ENCODE measurements at regions of chr2 and their contacts with region 1.

Region 1: GRCh38 chr2:207166039-207166348 is 246 bp upstream of the KLF7 start:
- DNase-seq: peak; percentile 99
- H3K4me3 ChIP-seq: peak overlapping the region; percentile 69
- H3K27ac ChIP-seq: peak overlapping the region; percentile 98
- H3K27me3 ChIP-seq: no peaks in the 10 kb centered on the region
- CTCF ChIP-seq: no peak

Region 2: DNA sequence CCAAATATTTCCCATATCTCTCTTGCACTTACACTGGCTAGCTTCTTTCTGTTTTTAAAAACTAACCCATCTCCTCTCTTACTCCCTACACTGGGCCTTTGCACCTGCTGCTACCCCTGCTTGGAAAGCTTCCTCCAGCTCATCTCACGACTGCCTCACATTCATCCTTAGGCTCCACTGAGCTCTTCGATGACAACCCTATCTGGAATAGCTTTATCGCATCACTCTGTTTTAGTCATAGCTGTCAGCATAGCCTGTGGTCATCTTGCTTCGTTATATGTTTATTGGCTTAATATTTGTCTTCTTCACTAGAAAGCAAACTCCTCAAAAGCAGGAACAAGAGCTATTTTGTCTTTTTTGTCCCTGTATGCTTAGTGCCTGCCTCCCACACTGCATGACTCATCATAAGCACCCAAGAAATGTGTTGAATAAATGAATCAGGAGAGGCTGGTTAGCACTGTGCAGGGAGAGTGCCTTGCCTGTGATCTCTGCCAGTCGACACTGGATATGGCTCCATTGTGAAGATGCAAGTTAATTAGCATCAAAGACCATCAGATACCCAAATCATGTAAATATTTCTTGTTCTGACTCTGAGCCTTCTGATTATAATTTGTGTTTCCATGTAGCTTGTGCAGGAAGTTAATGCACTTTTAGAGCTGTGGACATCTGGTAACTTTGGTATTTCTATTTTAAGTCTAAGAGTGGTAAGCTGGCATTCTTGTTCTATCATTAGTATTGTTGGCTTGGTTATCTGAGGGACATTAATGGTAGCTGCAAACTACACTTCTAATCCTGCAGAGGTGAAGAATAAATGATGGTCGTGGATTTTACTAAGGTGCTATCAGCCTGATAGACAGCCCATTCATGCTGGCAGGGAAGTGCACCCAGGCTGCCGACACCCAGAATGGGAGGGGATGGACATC is 437.5 kb before region 1 on chr2:
- CTCF ChIA-PET with region 1: no interaction called
- POLR2A ChIA-PET with region 1: no interaction called
- DNase-seq: no peak
- H3K4me3 ChIP-seq: no peak overlapping the region
- H3K27ac ChIP-seq: no peak overlapping the region
- H3K27me3 ChIP-seq: no peaks in the 10 kb centered on the region
- CTCF ChIP-seq: no peak

Region 3: GRCh38 chr2:206981739-206982340 is 184.2 kb before region 1 on chr2:
- CTCF ChIA-PET with region 1: interaction called, 10 read pairs
- POLR2A ChIA-PET with region 1: interaction called, 9 read pairs
- DNase-seq: peak; percentile 47
- H3K4me3 ChIP-seq: no peak overlapping the region
- H3K27ac ChIP-seq: no peak overlapping the region
- H3K27me3 ChIP-seq: no peaks in the 10 kb centered on the region
- CTCF ChIP-seq: peak; percentile 95

Region 4: DNA sequence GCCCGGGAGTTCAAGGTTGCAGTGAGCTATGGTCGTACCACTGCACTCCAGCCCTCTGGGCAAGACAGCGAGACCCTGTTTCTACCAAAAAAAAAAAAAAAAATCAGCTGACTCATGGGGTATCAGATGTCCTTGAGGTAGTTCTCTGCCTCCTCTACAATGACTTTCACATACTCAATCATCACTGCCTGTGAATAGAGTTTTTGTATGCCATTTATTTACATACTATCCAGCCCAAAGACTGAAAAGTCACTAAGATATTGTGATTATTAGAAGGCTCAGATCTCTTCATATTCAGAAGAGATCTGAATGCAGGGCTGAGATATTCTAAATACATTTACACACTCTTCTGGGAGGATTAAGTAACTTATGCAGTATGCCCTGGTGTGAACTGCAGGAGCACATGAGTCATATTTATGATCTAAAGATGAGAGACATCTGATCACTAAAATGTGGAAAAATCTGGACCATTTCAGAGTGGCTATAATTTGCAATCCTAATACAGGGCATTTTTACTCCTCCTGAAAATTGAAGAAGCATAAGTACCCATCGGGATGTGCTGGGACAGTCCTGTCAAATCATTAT is 39.2 kb before region 1 on chr2:
- CTCF ChIA-PET with region 1: no interaction called
- POLR2A ChIA-PET with region 1: no interaction called
- DNase-seq: no peak
- H3K4me3 ChIP-seq: no peak overlapping the region
- H3K27ac ChIP-seq: no peak overlapping the region
- H3K27me3 ChIP-seq: no peaks in the 10 kb centered on the region
- CTCF ChIP-seq: no peak

Region 5: DNA sequence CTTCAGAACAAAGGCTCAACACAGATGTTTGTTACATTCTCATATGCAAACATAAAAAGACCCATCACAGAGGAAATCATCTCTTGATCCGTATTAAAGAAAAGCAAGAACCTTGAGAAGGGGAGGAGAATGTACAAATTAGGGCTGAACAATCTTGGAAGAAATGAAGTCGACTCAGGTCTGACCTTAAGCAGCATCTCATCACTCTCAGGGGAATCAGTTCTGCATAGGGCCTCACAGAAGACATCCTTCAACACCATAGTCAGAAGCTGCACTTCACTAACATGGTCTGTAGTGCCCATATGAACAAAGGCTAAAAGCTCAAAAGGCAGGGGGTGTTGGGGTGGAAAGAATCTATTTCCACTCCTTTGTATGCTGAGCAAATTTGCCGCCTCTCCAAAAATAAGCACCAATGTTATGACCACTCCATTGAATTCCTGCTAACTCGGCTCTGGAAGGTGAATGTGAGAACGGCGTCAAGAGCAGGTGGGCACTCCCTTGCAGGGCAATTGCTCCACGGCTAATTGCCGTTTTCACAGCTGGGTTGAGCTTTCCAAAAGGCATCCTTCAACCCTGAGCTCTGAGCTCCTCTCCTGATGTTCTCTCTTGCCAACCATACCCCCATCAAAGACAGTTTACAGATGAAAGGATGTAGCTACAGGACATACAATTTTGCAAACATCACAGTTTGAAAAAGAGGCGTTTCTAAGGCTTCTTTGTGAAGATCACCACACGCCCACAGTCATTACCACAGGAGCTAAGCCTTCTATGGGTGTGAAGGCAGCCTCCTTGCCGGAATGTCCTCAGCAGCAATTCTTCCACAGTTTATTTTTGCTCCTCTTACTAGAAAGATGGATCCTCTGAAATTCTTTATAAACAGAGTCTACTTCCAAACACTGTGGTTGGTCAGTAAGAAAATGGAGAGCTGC is 10.2 kb before region 1 on chr2:
- CTCF ChIA-PET with region 1: no interaction called
- POLR2A ChIA-PET with region 1: no interaction called
- DNase-seq: no peak
- H3K4me3 ChIP-seq: no peak overlapping the region
- H3K27ac ChIP-seq: no peak overlapping the region
- H3K27me3 ChIP-seq: no peaks in the 10 kb centered on the region
- CTCF ChIP-seq: no peak

Region 6: DNA sequence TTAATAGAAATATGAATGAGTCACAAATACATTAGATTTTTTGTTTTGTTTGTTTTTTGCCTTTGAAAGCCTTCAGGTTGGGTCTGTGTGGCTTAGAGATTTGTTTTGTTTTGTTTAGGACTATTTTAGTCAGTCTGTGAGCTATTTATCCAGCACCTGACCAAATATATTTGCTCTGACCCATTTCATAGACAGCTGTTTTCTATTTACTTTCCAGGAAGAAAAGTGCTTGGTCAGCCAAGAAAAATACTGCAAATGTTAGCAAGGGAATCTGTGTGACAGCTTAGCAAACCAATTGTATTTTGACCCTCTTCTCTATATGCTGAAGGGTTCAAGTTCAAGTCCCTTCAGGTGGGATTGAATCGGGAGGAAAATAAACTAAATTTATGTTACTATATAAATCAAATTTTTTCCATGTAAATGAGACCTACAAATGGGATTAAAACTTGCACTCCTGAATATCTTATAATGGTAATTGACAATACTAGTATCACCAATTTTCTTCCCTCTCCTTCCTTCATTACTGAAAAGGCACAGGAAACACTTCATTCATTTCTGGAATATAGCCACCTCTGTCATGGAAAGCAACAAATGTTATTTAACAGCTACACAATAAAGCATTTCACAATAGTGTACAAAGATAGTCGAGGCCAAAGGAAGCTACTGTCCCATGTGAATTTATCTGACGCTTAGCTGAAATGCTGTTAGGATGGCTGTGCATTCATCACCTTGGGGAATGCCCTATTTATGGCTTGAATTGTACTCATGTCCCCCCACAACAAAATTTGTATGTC is 22.8 kb after region 1 on chr2:
- CTCF ChIA-PET with region 1: no interaction called
- POLR2A ChIA-PET with region 1: interaction called, 11 read pairs
- DNase-seq: no peak
- H3K4me3 ChIP-seq: no peak overlapping the region
- H3K27ac ChIP-seq: no peak overlapping the region
- H3K27me3 ChIP-seq: no peaks in the 10 kb centered on the region
- CTCF ChIP-seq: no peak

Region 7: DNA sequence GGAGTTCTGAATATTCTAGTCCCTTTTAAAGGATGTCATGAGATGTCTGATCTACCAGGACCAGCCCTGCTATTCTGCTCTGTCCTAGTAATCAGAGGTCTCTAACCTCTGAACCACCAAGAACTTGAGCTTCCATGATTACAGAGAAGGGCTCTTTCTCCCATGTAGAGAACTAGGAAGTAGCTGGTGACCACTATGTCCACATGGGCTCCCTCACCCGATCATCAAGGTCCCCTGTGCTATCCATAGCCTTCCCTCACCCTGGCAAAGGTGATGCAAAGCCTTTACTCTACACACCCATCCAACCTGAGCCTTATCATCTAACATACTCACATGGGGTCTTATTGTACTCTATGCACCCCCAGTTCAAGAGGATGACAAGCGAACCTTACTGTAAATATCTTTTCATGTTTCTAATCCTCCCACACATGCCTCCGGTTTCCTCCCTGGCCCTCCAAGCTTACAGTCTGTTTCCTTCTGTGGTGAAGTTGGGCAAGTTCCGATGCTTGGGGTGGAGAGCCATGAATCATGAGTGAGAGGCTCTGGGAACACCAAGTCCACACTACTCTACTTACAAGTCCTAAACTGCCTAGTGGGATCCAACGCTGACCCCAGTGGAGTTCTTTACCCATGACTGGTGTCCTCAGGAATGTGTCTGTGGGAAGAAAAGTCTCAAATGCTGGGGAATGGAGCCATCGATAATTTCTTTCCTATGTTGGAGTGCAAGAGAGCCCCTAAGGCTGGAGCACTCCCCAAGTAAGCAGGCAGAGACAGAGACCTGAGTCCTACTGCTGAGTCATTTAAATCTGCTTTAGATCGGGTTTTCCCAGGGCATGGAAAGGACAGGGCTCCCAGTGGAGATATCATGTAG is 73.1 kb after region 1 on chr2:
- CTCF ChIA-PET with region 1: interaction called, 3 read pairs
- POLR2A ChIA-PET with region 1: interaction called, 32 read pairs
- DNase-seq: peak; percentile 98
- H3K4me3 ChIP-seq: no peak overlapping the region; the same call in 1 of the 2 replicates
- H3K27ac ChIP-seq: peak overlapping the region; percentile 90
- H3K27me3 ChIP-seq: no peaks in the 10 kb centered on the region
- CTCF ChIP-seq: no peak

Region 8: GRCh38 chr2:207334624-207335371 is 168.8 kb after region 1 on chr2:
- CTCF ChIA-PET with region 1: no interaction called
- POLR2A ChIA-PET with region 1: interaction called, 17 read pairs
- DNase-seq: peak; percentile 93
- H3K4me3 ChIP-seq: peak overlapping the region; percentile 42
- H3K27ac ChIP-seq: peak overlapping the region; percentile 97
- H3K27me3 ChIP-seq: no peaks in the 10 kb centered on the region
- CTCF ChIP-seq: no peak

Region 9: GRCh38 chr2:207540431-207540830 is 374.4 kb after region 1 on chr2:
- CTCF ChIA-PET with region 1: no interaction called
- POLR2A ChIA-PET with region 1: interaction called, 10 read pairs
- DNase-seq: no peak
- H3K4me3 ChIP-seq: no peak overlapping the region
- H3K27ac ChIP-seq: no peak overlapping the region
- H3K27me3 ChIP-seq: no peaks in the 10 kb centered on the region
- CTCF ChIP-seq: no peak